Activated CD4-positive, alpha-beta memory T cell treated with anti-CD3 and anti-CD28 coated beads for 36 hours (primary cell): ENCODE measurements at regions of chr12 and their contacts with region 1.

Region 1: GRCh38 chr12:56448860-56449621 is at the start of gene TIMELESS:
- DNase-seq: peak; percentile 92
- H3K4me3 Mint-ChIP-seq: peak within 1 kb of the TSS; percentile 88
- H3K27ac Mint-ChIP-seq: peak within 1 kb of the TSS; percentile 93
- H3K4me1 Mint-ChIP-seq: peaks cover 18% of the 10 kb centered on the region
- H3K27me3 Mint-ChIP-seq: no peaks in the 10 kb centered on the region
- total RNA-seq, gene TIMELESS: 60.1 to 62.6 TPM

Region 2: GRCh38 chr12:56333679-56334489 is 115.2 kb before region 1 on chr12 and contains the start of gene PAN2:
- CTCF ChIA-PET with region 1: no interaction called
- POLR2A ChIA-PET with region 1: interaction called, 7 read pairs
- intact Hi-C with region 1: loop called (anchors 1 kb)
- DNase-seq: peak; percentile 97
- H3K4me3 Mint-ChIP-seq: peak within 1 kb of the TSS; percentile 94
- H3K27ac Mint-ChIP-seq: peak within 1 kb of the TSS; percentile 99
- H3K4me1 Mint-ChIP-seq: peaks cover 43% of the 10 kb centered on the region
- H3K27me3 Mint-ChIP-seq: no peaks in the 10 kb centered on the region
- total RNA-seq, gene PAN2: 49.0 to 51.2 TPM

Region 3: GRCh38 chr12:56462565-56462964 is 13.5 kb after region 1 on chr12:
- CTCF ChIA-PET with region 1: interaction called, 39 read pairs
- POLR2A ChIA-PET with region 1: interaction called, 7 read pairs
- intact Hi-C with region 1: no loop called
- DNase-seq: no peak
- H3K4me3 Mint-ChIP-seq: no peak overlapping the region
- H3K27ac Mint-ChIP-seq: no peak overlapping the region
- H3K4me1 Mint-ChIP-seq: peaks cover 7% of the 10 kb centered on the region
- H3K27me3 Mint-ChIP-seq: no peaks in the 10 kb centered on the region

Region 4: DNA sequence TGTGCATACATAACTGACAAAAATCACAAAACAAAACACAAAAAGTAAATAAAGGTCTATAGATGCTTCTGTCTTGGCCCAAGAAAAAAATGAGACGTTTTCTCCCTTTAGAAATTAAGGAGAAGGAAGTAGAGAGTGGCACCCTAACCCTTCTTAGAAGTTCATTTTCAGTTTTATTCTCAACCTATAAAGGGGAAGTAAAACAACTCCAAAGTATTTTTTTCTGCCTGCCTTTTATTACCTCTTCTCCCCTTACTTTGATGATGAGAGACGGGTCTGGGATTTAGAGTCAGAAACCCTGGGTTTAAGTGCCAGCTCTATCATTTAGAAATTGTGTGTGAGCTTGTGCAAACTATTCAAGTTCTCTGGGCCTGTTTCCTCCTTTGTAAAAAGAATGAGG is 300.3 kb after region 1 on chr12:
- CTCF ChIA-PET with region 1: no interaction called
- POLR2A ChIA-PET with region 1: no interaction called
- intact Hi-C with region 1: no loop called
- DNase-seq: no peak
- H3K4me3 Mint-ChIP-seq: peak overlapping the region; percentile 59
- H3K27ac Mint-ChIP-seq: peak overlapping the region; percentile 45
- H3K4me1 Mint-ChIP-seq: peaks cover 32% of the 10 kb centered on the region
- H3K27me3 Mint-ChIP-seq: no peaks in the 10 kb centered on the region